ENCODE measurements at regions of chr4 and their contacts with region 1.

Region 1: DNA sequence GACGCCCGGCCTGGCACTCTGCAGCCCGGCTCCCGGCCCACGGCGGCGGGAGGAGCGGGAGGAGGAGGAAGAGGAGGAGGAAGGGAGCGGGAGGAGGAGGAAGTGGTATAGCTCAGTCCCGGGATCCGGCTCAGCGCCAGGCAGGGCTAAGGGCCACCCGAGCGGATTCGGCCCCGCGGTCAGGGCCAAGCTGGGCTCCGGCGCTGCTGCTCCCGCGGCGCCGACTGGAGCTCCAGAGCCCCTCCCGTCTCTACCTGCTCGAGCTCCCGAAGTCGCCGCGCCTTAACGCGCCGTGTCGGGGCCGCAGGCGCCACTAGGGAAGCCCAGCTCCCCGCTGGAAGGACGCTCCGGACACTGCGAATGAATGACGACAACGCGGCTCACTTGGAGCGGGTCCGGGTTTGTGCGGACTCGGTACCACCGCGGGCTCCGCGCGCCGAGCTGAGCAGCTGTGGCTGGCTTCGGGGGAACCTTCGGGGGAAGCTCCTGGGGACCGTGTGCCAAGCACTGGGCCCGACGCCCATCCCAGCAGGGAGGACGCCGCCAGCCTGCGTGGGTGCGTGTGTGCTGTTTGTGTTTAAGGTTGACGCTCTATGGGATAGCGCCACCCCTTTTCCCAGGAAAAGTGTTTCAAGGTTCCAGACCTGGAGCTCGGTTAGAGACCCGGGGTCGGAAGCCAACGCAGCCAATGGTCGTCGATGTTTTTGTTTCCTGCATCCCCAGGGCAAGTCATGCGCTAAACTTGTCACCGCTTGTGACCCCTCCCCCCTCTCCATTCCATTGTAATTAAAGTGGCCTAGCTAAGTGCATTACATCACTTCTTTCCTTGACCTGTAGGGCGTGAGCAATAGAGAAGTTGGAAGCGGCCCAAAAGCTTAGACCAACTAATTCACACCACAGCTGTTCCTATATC is at the start of gene TBC1D9:
- DNase-seq: peak; percentile 75

Region 2: DNA sequence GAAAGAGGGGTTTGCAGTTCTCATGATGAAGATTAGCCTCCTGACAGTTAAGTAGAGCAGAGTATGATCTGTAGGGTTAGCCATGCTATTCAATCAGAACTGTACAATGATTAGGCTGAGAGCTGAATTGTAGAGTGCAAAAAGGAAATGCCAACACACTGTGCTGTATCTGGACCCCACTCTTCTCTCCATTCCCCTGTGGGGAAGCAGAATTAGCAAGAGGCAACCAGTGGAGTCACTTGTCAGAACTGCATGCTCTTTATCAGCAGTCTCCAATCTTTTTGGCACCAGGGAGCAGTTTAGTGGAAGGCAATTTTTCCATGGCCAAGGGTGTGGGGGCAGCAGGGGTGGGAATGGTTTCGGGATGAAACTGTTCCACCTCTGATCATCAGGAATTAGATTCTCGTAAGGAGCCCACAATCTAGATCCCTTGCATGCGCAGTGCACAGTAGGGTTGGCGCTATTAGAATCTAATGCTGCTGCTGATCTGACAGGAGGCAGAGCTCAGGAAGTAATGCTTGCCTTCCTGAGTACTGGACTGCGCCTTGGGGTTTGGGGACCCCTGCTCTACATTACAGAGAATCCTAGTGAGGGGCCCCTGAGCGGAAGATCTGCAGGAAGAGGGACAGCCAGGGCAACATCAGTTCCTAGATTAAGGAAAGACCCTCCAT is 19.8 kb before region 1 on chr4:
- CTCF ChIA-PET with region 1: no interaction called
- POLR2A ChIA-PET with region 1: interaction called, 12 read pairs
- DNase-seq: no peak

Region 3: GRCh38 chr4:140743194-140743931 is 13.2 kb before region 1 on chr4:
- CTCF ChIA-PET with region 1: interaction called, 9 read pairs
- POLR2A ChIA-PET with region 1: interaction called, 11 read pairs
- DNase-seq: no peak

Region 4: DNA sequence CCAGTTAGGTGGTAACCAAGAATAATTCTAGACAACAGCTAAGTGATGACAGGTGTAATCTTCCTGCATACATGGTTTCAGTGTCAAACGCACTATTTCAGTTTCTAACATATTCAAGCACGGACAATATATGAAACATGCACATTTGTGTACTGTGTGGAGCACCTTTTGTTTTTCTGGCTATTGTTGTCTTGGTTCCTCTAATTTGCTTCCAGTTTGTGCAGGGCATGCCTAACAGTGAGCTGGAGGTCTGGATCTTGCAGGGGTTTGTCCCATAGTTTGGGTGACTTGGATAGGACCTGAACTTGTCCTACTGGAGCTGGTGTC is 70.1 kb after region 1 on chr4:
- CTCF ChIA-PET with region 1: no interaction called
- POLR2A ChIA-PET with region 1: interaction called, 11 read pairs
- DNase-seq: no peak

Region 5: GRCh38 chr4:141028024-141028529 is 271.5 kb after region 1 on chr4:
- CTCF ChIA-PET with region 1: no interaction called
- POLR2A ChIA-PET with region 1: no interaction called
- DNase-seq: no peak